Cardiac septum (tissue), 1 donor: ENCODE measurements at regions of chr13 and their contacts with region 1.

Region 1: GRCh38 chr13:112821340-112822055 is 131.7 kb downstream of the ATP11A start:
- DNase-seq: no peak

Region 2: DNA sequence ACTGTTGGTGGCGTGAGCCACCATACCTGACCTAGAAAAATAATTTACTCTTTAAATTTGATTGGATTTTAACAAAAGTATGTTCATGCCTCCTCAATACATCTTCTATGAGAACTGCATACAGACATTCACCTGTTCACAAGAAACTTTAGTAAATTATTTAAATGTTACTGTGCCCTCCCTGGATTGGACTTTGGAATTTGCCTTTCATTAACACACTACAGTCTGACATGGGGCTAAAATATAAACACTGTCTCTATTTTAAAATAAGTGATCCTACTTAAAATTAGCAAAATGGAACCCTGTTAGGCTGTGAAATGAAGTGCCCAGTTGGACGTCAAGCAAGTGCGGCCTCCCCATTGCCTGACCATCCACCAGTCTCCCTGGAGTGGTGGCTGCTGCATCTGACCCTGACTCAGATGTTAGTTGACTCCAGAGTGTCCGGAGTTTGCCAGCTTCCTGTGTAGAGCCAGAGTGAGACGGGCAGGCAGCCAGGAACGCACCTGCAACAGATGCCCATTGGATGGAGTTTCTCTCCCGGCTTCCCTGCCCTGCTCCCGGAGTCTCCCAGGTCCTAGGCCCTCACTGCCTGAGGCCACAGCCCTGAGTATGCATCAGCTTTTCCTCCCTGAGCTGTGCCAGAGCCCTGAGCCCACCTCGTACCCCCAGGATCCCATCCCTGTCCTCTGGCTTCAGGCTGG is 177.6 kb before region 1 on chr13:
- intact Hi-C with region 1: loop called (anchors 5 kb)
- DNase-seq: peak; percentile 54